Common myeloid progenitor, CD34-positive (primary cell): ENCODE measurements at regions of chr19 and their contacts with region 1.

Region 1: DNA sequence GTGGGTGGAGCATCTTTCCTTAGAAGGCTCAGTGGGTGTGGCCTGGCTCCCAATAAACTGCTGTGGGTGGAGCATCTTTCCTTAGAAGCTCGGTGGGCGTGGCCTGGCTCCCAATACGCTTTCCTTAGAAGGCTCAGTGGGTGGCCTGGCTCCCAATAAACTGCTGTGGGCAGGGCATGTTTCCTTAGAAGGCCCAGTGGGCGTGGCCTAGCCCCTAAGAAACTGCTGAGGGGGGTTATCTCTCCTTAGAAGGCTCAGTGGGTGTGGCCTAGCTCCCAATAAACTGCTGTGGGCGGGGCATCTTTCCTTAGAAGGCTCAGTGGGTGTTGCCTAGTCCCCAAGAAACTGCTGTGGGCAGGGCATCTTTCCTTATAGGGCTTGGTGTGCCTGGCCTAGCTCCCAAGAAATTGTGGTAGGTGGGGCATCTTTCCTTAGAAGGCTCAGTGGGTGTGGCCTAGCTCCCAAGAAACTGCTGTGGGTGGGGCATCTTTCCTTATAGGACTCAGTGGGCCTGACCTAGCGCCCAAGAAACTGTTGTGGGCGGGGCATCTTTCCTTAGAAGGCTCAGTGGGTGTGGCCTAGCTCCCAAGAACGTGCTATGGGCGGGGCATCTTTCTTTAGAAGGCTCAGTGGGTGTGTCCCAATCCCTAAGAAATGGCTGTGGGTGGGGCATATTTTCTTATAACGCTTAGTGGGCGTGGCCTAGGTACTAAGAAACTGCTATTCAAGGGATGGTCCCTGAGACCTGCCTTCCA is 10.3 kb downstream of the HSH2D start:
- DNase-seq: peak in 2 of 3 donors; percentile 49 to 61
- H3K4me3 ChIP-seq: no peak overlapping the region
- H3K27ac ChIP-seq: peak overlapping the region in 1 of 2 experiments; percentile 37
- H3K4me1 ChIP-seq: peaks cover under 1 to 66% (median 56%) of the 10 kb centered on the region in 4 experiments
- H3K27me3 ChIP-seq: no peaks in the 10 kb centered on the region

Region 2: DNA sequence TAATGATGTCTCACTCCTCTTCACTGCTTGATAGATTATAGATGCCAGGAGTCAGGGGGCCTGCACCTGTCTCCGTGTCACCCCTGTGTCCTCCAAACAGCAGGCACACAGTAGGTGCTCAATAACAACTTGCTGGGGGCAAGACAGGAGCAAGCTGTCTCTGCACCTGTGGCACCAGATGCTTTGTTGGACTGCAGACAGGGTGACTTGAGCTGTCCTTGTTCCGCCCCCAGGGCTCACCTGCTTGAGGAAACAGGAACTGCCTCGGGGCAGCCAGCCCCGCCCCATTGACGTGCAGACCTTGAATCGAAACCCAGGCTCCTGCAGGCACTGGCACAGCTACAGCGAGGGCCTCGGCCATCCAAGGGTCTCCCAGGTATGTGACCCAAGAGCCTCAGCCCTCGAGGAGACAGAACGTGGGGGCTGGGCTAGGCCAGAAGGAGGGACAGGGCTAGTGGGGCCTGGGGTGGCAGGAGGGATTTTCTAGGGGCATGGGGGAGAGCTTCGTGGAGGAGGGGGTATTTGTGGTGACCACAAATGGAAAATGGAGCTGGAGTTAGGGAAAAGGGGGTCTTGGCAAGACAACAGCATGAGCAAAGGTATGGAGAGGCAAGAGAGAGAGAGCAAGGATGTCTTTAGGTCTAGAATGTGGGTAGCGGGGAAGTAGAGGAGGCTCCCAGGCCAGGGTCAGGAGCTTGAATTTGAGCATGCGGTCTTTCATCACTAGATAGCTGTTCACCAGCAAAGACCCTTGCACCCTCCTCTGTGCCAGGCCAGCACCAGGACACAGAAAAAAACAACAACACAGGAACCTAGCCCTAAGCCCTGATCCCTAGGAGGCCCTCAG is 10.1 kb before region 1 on chr19 and contains the start of gene HSH2D:
- CTCF ChIA-PET with region 1: interaction called, 11 read pairs
- POLR2A ChIA-PET with region 1: interaction called, 4 read pairs
- DNase-seq: peak; percentile 84 to 94 (median 92)
- H3K4me3 ChIP-seq: peak within 1 kb of the TSS; percentile 40 to 94 (median 72)
- H3K27ac ChIP-seq: peak within 1 kb of the TSS; percentile 69 to 81
- H3K4me1 ChIP-seq: peaks cover 10 to 94% (median 87%) of the 10 kb centered on the region in 4 experiments
- H3K27me3 ChIP-seq: no peaks in the 10 kb centered on the region

Region 3: DNA sequence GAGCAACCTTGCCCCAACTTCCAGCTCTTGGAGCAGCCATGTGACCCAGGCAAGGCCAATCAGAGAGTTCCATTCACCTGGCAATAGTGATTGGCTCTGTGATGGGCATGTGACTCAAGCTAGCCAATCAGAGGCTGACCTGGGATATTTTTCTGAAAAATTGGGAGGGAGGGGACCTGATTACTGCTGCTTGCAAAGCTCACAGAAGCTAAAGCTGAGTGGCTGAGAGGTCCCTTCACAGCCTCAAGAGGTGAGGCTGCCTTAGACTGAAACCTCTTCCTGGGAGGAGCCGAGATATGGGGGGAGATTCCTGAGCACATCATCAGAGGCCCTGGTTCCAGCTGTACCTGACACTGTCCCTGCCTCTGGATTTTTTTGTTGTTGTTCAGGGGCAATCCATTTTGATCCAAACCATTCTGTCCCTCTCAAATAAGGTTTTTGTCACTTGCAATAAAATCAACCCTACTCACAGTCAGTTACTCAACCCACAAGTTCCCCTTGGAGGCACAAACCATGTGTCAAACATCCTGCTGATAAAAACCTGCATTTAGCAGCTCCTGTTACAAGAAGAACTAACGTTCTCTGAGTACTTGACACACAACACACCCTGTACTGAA is 14.8 kb after region 1 on chr19:
- CTCF ChIA-PET with region 1: interaction called, 13 read pairs
- POLR2A ChIA-PET with region 1: no interaction called
- DNase-seq: peak; percentile 75 to 97 (median 94)
- H3K4me3 ChIP-seq: peak overlapping the region in 1 of 7 experiments; percentile 0
- H3K27ac ChIP-seq: peak overlapping the region in 1 of 2 experiments; percentile 52
- H3K4me1 ChIP-seq: peaks cover 0 to 46% (median 35%) of the 10 kb centered on the region in 4 experiments
- H3K27me3 ChIP-seq: no peaks in the 10 kb centered on the region

Region 4: GRCh38 chr19:16226878-16227836 is 73.4 kb after region 1 on chr19:
- CTCF ChIA-PET with region 1: no interaction called
- POLR2A ChIA-PET with region 1: no interaction called
- DNase-seq: no peak
- H3K4me3 ChIP-seq: no peak overlapping the region
- H3K27ac ChIP-seq: no peak overlapping the region
- H3K4me1 ChIP-seq: peaks cover 0 to 2% (median 0%) of the 10 kb centered on the region in 4 experiments
- H3K27me3 ChIP-seq: no peaks in the 10 kb centered on the region

Region 5: DNA sequence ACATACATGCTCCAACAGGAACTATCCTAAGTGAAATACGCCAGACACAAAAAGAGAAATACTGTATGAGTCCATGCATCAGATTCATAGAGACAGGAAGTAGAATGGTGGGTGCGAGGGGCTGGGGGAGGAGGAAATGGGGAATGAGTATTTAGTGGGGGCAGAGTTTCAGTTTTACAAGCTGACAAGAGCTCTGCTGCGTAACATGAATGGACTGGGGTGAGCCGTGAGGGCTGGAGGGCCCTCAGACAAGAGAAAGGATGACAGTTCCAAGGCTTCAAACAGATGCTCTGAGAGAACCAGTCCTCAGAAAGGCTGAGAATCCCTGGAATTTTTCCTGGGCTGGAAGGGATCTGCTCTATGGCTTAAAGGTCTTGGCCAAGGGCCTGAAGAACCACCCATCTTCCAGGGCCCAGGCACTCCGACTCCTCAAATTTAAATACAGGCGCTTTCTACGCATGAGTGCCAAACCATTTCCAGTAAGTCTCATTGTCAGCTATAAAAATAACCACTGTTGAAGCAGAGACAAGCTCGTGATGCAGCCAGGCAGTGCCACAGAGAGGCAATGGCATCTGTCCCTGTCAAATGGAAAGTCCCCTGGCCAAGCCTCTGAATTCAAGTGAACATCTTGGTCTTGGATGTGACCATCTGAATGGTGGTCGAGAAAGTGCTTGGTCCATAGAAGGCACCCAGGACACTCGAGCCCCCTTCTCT is 188.4 kb after region 1 on chr19:
- CTCF ChIA-PET with region 1: no interaction called
- POLR2A ChIA-PET with region 1: no interaction called
- DNase-seq: peak in 2 of 3 donors; percentile 59 to 66
- H3K4me3 ChIP-seq: no peak overlapping the region
- H3K27ac ChIP-seq: no peak overlapping the region
- H3K4me1 ChIP-seq: peaks cover 3 to 32% (median 28%) of the 10 kb centered on the region in 4 experiments
- H3K27me3 ChIP-seq: peaks cover 0 to 4% (median 0%) of the 10 kb centered on the region in 5 experiments

Region 6: GRCh38 chr19:16495982-16496612 is 342.3 kb after region 1 on chr19 and contains the starts of genes C19orf44 and CALR3:
- CTCF ChIA-PET with region 1: no interaction called
- POLR2A ChIA-PET with region 1: no interaction called
- DNase-seq: peak; percentile 97 to 99 (median 98)
- H3K4me3 ChIP-seq: peak within 1 kb of the TSS; percentile 38 to 94 (median 81)
- H3K27ac ChIP-seq: peak within 1 kb of the TSS; percentile 46 to 80
- H3K4me1 ChIP-seq: peaks cover 0 to 13% (median 10%) of the 10 kb centered on the region in 4 experiments
- H3K27me3 ChIP-seq: no peaks in the 10 kb centered on the region